ENCODE measurements at regions of chr1 and their contacts with region 1.

Region 1: GRCh38 chr1:244796718-244797406 is 38.6 kb upstream of the COX20 start:
- DNase-seq: peak; percentile 51
- ATAC-seq: peak; percentile 52
- H3K4me3 ChIP-seq: no peak overlapping the region
- H3K27ac ChIP-seq: no peak overlapping the region
- H3K4me1 ChIP-seq: peaks cover 30% of the 10 kb centered on the region
- H3K27me3 ChIP-seq: no peaks in the 10 kb centered on the region
- CTCF ChIP-seq: peak; percentile 89
- EP300 ChIP-seq: no peak
- POLR2A ChIP-seq: no peak
- RAD21 ChIP-seq: peak; percentile 30

Region 2: GRCh38 chr1:244599937-244600350 is 196.9 kb before region 1 on chr1:
- CTCF ChIA-PET with region 1: interaction called, 45 read pairs
- POLR2A ChIA-PET with region 1: no interaction called
- in situ Hi-C with region 1: loop called (anchors 5 kb)
- intact Hi-C with region 1: loop called (anchors 1 kb)
- DNase-seq: peak; percentile 16
- ATAC-seq: no peak
- H3K4me3 ChIP-seq: no peak overlapping the region
- H3K27ac ChIP-seq: no peak overlapping the region
- H3K4me1 ChIP-seq: no peaks in the 10 kb centered on the region
- H3K27me3 ChIP-seq: 0 out of 5 replicates have a peak, but pooled peaks cover 0 to 10% of the 10 kb centered on the region in 2 experiments
- CTCF ChIP-seq: no peak
- EP300 ChIP-seq: no peak; a peak in 1 of 4 replicates
- POLR2A ChIP-seq: no peak
- RAD21 ChIP-seq: no peak

Region 3: DNA sequence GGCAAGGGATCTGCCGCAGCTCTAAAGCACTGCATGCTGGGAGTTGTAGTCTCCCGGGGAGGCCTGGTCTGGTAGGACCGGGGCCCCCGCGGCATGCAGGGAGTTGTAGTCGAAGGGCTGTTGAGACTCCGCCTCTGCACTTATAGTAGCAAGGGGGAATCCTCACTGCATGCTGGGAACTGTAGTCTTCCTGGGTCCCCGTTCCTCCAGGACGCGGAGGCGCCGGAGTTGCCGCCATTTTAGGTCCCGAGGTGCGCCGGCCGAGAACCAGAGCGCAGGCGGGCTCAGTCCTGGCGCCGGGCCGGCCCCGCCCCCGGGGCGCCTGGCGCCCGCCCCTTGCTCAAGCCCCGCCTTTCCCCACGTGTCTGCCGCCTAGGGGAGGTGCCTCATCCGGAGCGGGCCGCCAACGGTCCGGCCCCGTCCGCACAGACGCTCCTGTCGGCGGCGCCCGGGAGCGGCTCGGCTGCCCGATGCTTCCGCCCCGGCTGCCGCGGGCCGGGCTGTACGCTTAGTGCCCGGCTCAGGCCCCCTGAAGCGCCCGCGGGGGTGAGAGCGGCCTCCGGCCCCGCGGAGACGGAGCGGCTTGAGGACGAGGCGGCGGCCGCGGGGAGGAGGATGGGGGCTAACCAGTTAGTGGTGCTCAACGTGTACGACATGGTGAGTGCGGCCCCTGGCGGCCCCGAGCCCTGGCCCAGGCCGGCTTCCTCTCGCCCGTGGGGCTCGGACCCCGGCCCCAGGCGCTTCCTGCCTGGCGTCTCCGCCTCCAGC is 144.0 kb before region 1 on chr1 and contains the start of gene DESI2:
- CTCF ChIA-PET with region 1: no interaction called
- POLR2A ChIA-PET with region 1: interaction called, 3 read pairs
- in situ Hi-C with region 1: no loop called
- intact Hi-C with region 1: loop called (anchors 2 kb)
- DNase-seq: peak; percentile 99
- ATAC-seq: peak; percentile 97
- H3K4me3 ChIP-seq: peak within 1 kb of the TSS; percentile 69 to 94 (median 94)
- H3K27ac ChIP-seq: peak within 1 kb of the TSS; percentile 83
- H3K4me1 ChIP-seq: peaks cover 27% of the 10 kb centered on the region
- H3K27me3 ChIP-seq: no peaks in the 10 kb centered on the region; a peak in 1 of 5 replicates
- CTCF ChIP-seq: peak; percentile 71
- EP300 ChIP-seq: peak in 1 of 2 experiments; percentile 42; a peak in 2 of 4 replicates
- POLR2A ChIP-seq: peak; percentile 87 to 88
- RAD21 ChIP-seq: peak; percentile 67
- total RNA-seq, gene DESI2: 42.2 and 62.0 TPM in 2 replicates

Region 4: DNA sequence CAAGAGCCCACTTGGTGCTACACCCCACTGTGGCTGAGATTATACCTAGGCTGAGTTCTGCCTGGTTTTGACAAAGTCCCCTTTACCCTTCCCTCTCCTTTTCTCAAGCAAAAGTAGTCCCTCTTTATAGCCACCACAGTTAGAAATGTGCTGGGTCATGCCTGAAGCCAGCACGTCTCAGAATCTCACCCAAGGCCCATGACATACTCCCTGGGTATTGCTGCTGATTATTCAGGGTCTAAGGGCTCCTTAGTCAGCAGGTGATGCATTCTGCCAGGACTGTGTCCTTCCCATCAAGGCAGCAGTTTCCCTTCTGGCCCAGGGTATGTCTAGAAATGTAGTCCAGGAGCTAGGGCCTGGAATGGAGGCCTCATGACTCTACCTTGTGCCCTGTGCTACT is 28.7 kb before region 1 on chr1:
- CTCF ChIA-PET with region 1: no interaction called
- POLR2A ChIA-PET with region 1: no interaction called
- in situ Hi-C with region 1: no loop called
- intact Hi-C with region 1: no loop called
- DNase-seq: no peak
- ATAC-seq: no peak
- H3K4me3 ChIP-seq: no peak overlapping the region
- H3K27ac ChIP-seq: no peak overlapping the region
- H3K4me1 ChIP-seq: no peaks in the 10 kb centered on the region
- H3K27me3 ChIP-seq: peaks cover 2 to 27% of the 10 kb centered on the region in 2 experiments; a peak in 4 of 5 replicates
- CTCF ChIP-seq: no peak
- EP300 ChIP-seq: no peak
- POLR2A ChIP-seq: no peak
- RAD21 ChIP-seq: no peak